ENCODE measurements at regions of chr12 and their contacts with region 1.

Region 1: GRCh38 chr12:122003651-122004611 is 17.8 kb upstream of the BCL7A start:
- DNase-seq: peak; percentile 99
- H3K4me3 ChIP-seq: peak overlapping the region; percentile 78
- H3K27ac ChIP-seq: peak overlapping the region; percentile 100
- H3K4me1 ChIP-seq: peaks cover 80% of the 10 kb centered on the region
- CTCF ChIP-seq: no peak

Region 2: DNA sequence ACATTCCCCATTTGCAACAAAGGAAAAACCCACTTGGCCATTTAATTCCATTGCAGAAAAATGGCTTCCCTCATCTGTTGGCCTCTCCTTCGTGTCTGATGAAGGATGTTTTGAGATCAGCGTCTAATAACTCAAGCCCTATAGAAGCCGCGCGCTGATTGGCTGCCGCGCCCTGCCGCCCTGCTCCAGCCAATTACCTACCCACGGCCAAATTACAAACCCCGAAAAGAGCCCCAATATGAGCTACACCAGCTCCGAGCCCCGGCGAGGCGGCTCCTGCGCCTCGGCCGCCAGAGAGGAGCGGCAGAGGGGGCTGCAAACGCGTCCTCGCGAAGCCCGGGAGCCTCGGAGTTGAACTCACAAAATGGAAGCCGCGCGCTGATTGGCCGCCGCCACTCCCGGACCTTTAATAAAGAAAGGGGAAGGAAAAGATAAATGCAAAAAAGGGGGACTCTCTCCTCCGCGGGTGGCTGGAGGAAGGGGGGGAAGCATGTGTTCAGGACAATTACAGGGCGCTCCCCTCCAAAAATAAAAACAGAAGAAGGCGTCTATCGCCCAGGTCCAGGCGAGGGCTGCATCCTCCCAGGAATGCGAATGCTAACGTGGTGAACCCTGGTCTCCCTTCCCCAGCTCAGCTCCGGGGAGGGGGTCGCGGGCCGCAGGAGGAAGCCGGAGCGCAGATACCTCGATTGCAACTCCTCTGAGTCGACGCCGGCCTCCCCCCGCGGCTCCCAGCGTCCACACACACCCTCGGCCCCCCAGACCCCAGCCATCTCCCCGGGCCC is 200.9 kb before region 1 on chr12:
- CTCF ChIA-PET with region 1: no interaction called
- POLR2A ChIA-PET with region 1: interaction called, 6 read pairs
- intact Hi-C with region 1: loop called (anchors 5 kb)
- DNase-seq: peak; percentile 93
- H3K4me3 ChIP-seq: peak overlapping the region; percentile 75
- H3K27ac ChIP-seq: peak overlapping the region; percentile 95
- H3K4me1 ChIP-seq: peaks cover 69% of the 10 kb centered on the region
- CTCF ChIP-seq: no peak

Region 3: DNA sequence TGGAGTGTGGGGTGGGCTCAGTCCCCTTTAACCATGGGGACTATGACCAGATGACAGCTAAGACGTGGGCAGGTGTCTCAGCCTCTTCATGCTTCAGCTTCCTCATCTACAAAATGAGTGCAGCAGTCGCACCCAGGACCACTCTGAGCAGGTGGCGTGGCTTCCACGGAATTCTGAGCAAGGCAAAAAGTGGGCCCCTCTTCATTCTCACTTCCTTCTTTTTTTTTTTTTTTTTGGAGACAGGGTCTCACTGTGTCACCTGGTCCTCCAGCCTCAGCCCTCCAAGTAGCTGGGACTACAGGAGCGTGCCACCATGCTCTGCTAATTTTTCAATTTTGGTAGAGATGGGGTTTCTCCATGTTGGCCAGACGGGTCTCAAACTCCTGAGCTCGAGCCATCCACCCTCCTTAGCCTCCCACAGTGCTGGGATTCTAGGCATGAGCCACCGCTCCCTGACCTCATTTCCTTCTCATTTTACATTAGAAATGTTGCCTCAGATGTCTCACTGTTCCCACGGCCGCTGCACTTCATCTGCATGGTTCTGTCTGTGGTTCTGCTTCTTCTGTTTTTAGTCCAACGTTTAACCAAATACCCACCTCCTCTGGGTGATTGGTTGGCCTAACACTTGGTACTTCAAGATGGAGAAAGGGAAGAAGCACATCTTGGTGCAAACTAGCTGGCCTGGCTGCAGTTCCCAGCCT is 23.6 kb before region 1 on chr12:
- CTCF ChIA-PET with region 1: interaction called, 5 read pairs
- POLR2A ChIA-PET with region 1: interaction called, 187 read pairs
- intact Hi-C with region 1: loop called (anchors 1 kb)
- DNase-seq: peak; percentile 98
- H3K4me3 ChIP-seq: peak overlapping the region; percentile 38
- H3K27ac ChIP-seq: peak overlapping the region; percentile 99
- H3K4me1 ChIP-seq: peaks cover 74% of the 10 kb centered on the region
- CTCF ChIP-seq: 0 out of 2 replicates have a peak, but pooled peaks have one; percentile 11

Region 4: DNA sequence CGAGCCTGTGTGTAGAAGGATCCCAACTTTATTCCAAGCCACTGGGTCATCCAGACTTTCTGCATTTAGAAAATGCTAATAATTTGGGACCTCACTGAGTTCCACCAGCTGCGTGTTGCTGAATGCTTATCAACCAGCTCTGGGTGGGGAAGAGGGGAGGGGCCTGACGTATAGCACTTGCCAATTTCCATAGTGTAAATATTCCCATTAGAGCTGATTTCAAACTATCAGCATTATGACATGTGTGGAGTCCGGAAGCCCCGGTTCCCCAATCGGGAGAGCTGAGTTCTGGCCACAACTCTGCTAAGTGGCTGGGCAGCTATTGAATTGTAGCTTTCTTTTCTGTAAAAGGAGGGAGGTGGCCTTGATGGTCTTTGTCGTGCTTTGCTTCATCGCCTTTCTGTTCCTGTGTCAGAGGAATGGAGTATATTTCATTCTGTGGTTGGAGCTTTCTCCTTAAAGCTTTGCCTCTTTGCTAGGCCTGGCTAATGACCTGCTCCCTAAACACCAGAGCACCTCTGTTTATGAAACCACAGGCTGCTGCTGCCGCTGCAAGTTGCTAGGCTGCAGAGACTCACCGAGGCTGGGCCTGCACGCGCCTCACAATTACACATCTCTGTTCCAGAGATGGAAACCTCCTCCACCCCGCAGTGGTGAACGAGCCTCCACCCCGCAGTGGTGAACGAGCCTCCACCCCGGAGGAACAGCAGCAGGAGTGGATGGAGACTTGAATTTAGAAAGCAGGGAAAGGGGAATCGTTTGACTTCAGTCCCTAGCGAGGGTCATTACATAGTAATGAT is 10.1 kb after region 1 on chr12:
- CTCF ChIA-PET with region 1: interaction called, 3 read pairs
- POLR2A ChIA-PET with region 1: interaction called, 165 read pairs
- intact Hi-C with region 1: no loop called
- DNase-seq: peak; percentile 79
- H3K4me3 ChIP-seq: peak overlapping the region; percentile 43
- H3K27ac ChIP-seq: peak overlapping the region; percentile 100
- H3K4me1 ChIP-seq: peaks cover 90% of the 10 kb centered on the region
- CTCF ChIP-seq: no peak

Region 5: GRCh38 chr12:122031342-122032216 is 27.6 kb after region 1 on chr12:
- CTCF ChIA-PET with region 1: interaction called, 8 read pairs
- POLR2A ChIA-PET with region 1: interaction called, 332 read pairs
- intact Hi-C with region 1: no loop called
- DNase-seq: peak; percentile 49
- H3K4me3 ChIP-seq: peak overlapping the region; percentile 33
- H3K27ac ChIP-seq: peak overlapping the region; percentile 94
- H3K4me1 ChIP-seq: peaks cover 64% of the 10 kb centered on the region
- CTCF ChIP-seq: peak; percentile 81